ENCODE measurements at regions of chr2 and their contacts with region 1.

Region 1: GRCh38 chr2:232321156-232321816 is 57.3 kb upstream of the ALPP start:
- DNase-seq: peak; percentile 74
- H3K4me3 Mint-ChIP-seq: peak overlapping the region; percentile 41
- H3K27ac Mint-ChIP-seq: peak overlapping the region; percentile 93
- H3K4me1 Mint-ChIP-seq: peaks cover 67% of the 10 kb centered on the region
- H3K27me3 Mint-ChIP-seq: no peaks in the 10 kb centered on the region

Region 2: DNA sequence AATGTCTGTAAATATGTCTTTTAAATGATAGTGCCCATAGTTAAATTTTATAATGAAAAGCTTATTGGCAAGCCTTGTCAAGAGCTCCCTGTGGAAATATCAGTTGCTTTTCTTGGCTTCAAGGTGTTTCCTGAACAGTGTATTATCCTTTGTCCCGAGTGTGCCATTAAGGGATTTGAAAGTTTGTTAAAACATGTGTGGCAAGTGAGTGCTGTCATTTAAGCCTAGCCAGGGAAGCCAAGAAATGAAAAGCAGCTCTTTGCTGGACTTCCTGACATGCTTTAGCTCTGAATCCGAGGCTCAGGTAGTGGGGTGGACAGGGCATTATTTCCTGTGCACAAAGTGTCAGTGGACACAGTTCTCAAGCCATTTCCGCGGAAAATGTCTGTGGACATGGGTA is 248.3 kb before region 1 on chr2:
- CTCF ChIA-PET with region 1: no interaction called
- POLR2A ChIA-PET with region 1: no interaction called
- DNase-seq: no peak
- H3K4me3 Mint-ChIP-seq: no peak overlapping the region
- H3K27ac Mint-ChIP-seq: no peak overlapping the region
- H3K4me1 Mint-ChIP-seq: peaks cover 14% of the 10 kb centered on the region
- H3K27me3 Mint-ChIP-seq: no peaks in the 10 kb centered on the region

Region 3: DNA sequence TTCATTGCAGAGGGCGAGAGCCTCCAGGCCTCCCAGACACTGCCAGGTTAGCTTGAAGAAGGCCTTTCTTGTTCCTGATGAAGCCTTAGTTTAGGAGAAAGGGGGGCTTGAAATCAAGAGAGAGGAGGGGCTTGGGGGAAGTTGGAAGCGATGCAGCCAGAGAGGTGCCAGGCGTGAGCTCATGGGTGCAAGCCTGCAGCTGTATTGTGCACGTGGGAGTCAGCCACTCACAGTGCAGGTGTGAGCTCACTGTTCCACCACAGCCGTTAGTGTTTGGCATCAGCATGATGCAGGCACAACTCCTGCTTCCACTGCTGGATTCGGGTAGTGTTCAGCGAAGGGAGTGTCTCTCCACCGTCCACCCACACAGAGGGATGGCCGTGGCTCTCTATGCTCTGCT is 11.2 kb before region 1 on chr2:
- CTCF ChIA-PET with region 1: interaction called, 31 read pairs
- POLR2A ChIA-PET with region 1: no interaction called
- DNase-seq: peak; percentile 46
- H3K4me3 Mint-ChIP-seq: peak overlapping the region; percentile 47
- H3K27ac Mint-ChIP-seq: peak overlapping the region; percentile 95
- H3K4me1 Mint-ChIP-seq: peaks cover 74% of the 10 kb centered on the region
- H3K27me3 Mint-ChIP-seq: no peaks in the 10 kb centered on the region